Calu3 (cell line): ENCODE measurements at regions of chr3 and their contacts with region 1.

Region 1: GRCh38 chr3:56801662-56802377 is at the start of gene ARHGEF3:
- DNase-seq: peak; percentile 80
- H3K4me3 Mint-ChIP-seq: peak within 1 kb of the TSS; percentile 75
- H3K27ac Mint-ChIP-seq: peak within 1 kb of the TSS; percentile 48
- H3K4me1 Mint-ChIP-seq: peaks cover 10% of the 10 kb centered on the region
- H3K27me3 Mint-ChIP-seq: no peaks in the 10 kb centered on the region
- CTCF ChIP-seq: no peak
- total RNA-seq, gene ARHGEF3: 20.9 and 21.8 TPM in 2 replicates

Region 2: DNA sequence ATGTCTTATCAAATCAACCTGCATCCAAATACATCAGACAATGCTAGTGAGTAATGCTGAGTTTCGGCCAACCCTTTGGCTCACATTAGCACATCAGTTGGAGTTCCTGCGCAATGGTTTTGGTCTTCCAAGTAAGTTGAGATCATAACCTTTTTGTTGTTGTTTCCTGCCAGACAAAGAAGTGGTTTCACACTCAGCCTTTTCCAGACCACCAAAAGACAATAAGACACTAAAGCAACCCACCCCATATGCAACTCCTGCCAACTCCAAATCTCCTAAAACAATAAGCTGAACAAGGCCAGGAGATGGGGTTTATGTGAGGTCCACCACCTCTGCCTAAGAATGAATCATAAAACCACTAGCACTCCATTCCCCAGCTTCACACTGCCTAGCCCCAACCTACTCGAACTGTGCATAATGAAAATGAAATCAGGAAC is 510.6 kb before region 1 on chr3:
- CTCF ChIA-PET with region 1: no interaction called
- intact Hi-C with region 1: no loop called
- DNase-seq: no peak
- H3K4me3 Mint-ChIP-seq: no peak overlapping the region
- H3K27ac Mint-ChIP-seq: no peak overlapping the region
- H3K4me1 Mint-ChIP-seq: no peaks in the 10 kb centered on the region
- H3K27me3 Mint-ChIP-seq: peaks cover 38% of the 10 kb centered on the region
- CTCF ChIP-seq: no peak

Region 3: DNA sequence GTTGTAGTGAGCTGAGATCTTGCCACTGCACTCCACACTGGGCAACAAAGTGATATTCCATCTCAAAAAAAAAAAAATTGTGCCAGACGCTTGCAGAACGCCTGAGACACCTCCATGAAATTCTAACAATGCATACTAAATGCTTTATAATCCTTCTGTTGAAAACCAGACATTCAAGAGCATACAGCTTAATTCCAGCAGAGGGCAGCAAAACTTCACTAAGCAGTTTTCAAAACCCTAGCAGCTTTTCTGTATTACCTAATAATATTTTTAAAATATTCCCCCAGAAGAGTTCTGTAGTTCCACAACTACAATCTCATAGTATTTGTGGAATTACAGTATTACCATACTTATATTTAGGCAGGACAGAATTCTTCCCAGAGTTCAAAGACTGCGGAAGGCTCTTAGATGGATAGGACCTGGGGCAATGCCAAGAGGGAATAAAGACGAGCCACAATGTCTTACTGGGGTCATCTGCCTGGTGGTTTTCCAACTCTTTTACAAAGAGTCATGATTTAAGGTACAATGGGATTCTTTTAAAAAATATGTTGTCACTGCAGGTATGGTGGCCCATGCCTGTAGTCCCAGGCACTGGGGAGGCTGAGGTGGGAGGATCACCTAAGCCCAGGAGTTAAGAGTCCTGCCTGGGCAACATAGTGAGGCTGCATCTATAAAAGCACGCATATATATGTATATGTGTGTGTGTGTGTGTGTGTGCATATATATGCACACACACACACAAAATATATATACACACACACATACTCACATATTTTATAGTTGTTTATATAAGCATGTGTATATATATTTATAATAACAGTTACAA is 99.1 kb before region 1 on chr3:
- CTCF ChIA-PET with region 1: interaction called, 36 read pairs
- intact Hi-C with region 1: loop called (anchors 1 kb)
- DNase-seq: peak; percentile 46
- H3K4me3 Mint-ChIP-seq: no peak overlapping the region
- H3K27ac Mint-ChIP-seq: no peak overlapping the region
- H3K4me1 Mint-ChIP-seq: peaks cover 6% of the 10 kb centered on the region
- H3K27me3 Mint-ChIP-seq: no peaks in the 10 kb centered on the region
- CTCF ChIP-seq: peak; percentile 47

Region 4: GRCh38 chr3:56758539-56758981 is 43.3 kb before region 1 on chr3:
- CTCF ChIA-PET with region 1: interaction called, 6 read pairs
- intact Hi-C with region 1: loop called (anchors 5 kb)
- DNase-seq: peak; percentile 60
- H3K4me3 Mint-ChIP-seq: peak overlapping the region; percentile 30
- H3K27ac Mint-ChIP-seq: peak overlapping the region; percentile 77
- H3K4me1 Mint-ChIP-seq: peaks cover 10% of the 10 kb centered on the region
- H3K27me3 Mint-ChIP-seq: no peaks in the 10 kb centered on the region
- CTCF ChIP-seq: no peak

Region 5: DNA sequence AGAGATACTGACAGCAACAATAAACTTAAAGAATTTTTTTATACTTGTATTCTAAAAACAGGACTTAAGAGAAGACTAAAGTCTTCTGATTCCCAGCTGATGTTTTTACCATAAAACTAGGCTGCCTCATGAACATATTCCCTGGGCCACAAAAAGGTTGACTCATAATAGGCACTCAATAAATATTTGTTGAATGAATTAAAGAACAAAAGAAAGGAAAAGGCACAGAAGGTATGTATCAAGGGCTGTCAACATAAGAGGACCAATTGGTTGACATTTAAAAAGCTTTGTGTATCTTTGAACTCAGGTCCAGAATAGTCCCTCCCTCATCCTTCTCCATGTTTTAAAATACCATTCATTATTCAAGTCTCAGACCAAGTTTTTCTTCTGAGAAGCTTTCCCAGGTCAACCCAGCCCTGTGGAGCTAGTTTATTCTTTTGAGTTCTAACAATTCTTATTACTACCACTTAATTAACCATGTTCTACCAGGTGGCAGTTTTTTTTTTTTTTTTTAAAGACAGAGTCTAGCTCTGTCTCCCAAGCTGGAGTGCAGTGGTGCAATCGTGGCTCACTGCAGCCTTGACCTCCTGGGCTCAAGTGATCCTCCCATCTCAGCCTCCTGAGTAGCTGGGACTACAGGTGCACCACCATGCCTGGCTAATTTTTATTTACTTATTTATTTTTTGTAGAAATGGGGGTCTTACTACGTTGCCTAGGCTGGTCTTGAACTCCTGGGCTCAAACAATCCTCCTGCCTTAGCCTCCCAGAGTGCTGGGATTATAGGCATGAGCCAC is 17.4 kb after region 1 on chr3:
- CTCF ChIA-PET with region 1: interaction called, 11 read pairs
- intact Hi-C with region 1: no loop called
- DNase-seq: no peak
- H3K4me3 Mint-ChIP-seq: no peak overlapping the region
- H3K27ac Mint-ChIP-seq: no peak overlapping the region
- H3K4me1 Mint-ChIP-seq: peaks cover 13% of the 10 kb centered on the region
- H3K27me3 Mint-ChIP-seq: no peaks in the 10 kb centered on the region
- CTCF ChIP-seq: no peak

Region 6: GRCh38 chr3:56988458-56989168 is 186.8 kb after region 1 on chr3:
- CTCF ChIA-PET with region 1: interaction called, 8 read pairs
- intact Hi-C with region 1: loop called (anchors 2 kb)
- DNase-seq: peak; percentile 72
- H3K4me3 Mint-ChIP-seq: no peak overlapping the region
- H3K27ac Mint-ChIP-seq: no peak overlapping the region
- H3K4me1 Mint-ChIP-seq: peaks cover 27% of the 10 kb centered on the region
- H3K27me3 Mint-ChIP-seq: no peaks in the 10 kb centered on the region
- CTCF ChIP-seq: peak; percentile 69